Activated CD4-positive, alpha-beta memory T cell treated with anti-CD3 and anti-CD28 coated beads for 36 hours (primary cell): ENCODE measurements at regions of chr7 and their contacts with region 1.

Region 1: GRCh38 chr7:95511716-95512260 is 26.0 kb downstream of the ASB4 start:
- DNase-seq: peak; percentile 63
- H3K4me3 Mint-ChIP-seq: no peak overlapping the region
- H3K27ac Mint-ChIP-seq: no peak overlapping the region
- H3K4me1 Mint-ChIP-seq: no peaks in the 10 kb centered on the region
- H3K27me3 Mint-ChIP-seq: peaks cover 11% of the 10 kb centered on the region

Region 2: DNA sequence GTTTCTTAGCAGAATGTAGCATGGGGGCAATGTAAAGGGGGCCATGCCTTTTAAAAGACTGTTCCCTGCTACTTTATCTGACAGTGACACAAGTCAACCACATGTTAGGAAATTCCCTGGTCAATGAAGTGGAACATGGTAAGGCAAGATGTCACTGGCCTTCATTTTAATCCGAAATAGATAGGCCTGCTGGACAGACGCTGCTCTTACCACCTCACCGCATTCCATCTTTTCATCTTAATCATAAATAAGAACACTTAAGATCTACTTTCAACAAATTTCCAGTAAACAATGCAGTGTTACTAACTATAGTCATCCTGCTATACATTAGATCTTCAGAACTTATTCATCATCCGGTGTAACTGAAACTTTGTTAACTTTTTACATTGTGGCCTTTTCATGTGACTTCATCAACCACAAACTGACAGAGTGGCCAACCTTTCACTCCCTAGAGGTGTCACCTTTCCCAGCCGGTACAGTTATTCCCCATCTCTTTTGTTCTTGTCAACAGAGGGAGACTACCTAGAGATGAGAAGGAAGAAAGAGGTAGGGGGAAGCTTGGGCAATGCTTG is 10.4 kb before region 1 on chr7:
- CTCF ChIA-PET with region 1: interaction called, 10 read pairs
- POLR2A ChIA-PET with region 1: no interaction called
- intact Hi-C with region 1: no loop called
- DNase-seq: peak; percentile 38
- H3K4me3 Mint-ChIP-seq: no peak overlapping the region
- H3K27ac Mint-ChIP-seq: peak overlapping the region; percentile 36
- H3K4me1 Mint-ChIP-seq: peaks cover 24% of the 10 kb centered on the region
- H3K27me3 Mint-ChIP-seq: peaks cover 13% of the 10 kb centered on the region

Region 3: GRCh38 chr7:95690367-95690947 is 178.7 kb after region 1 on chr7:
- CTCF ChIA-PET with region 1: interaction called, 82 read pairs
- POLR2A ChIA-PET with region 1: no interaction called
- intact Hi-C with region 1: loop called (anchors 1 kb)
- DNase-seq: no peak
- H3K4me3 Mint-ChIP-seq: no peak overlapping the region
- H3K27ac Mint-ChIP-seq: no peak overlapping the region
- H3K4me1 Mint-ChIP-seq: no peaks in the 10 kb centered on the region
- H3K27me3 Mint-ChIP-seq: peaks cover 2% of the 10 kb centered on the region

Region 4: DNA sequence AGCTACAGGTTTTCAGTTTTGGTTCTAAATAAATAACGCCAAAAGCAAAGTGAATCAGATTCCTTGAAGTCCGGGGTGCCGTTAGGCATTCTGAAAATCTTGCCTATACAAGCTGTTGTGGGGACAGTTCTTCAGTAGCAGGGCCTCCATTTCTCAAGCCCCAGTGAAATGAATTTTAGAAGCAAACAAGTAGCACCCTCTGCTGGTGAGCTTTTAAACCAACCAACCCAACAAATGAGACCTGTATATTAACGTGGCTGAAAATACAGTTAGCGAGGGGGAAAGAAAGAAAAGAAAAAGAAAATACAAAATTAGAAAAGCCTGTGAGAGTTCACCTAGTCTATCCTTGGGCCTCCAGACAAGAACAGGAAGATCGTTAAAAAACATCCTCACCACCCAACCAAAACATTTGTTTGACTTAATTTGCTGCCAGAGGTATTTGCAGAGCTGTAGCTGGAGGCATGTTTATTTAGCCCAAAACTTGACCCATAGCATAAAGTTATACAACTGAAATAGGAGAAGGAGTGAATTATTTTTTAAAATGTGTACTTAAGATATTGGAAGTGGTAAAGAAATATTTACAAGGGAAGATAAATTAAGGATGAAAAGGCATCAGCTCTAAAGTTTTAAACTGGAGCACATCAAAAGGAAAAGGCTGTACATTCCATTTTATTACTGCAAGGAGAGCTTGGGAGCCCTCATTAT is 359.4 kb after region 1 on chr7:
- CTCF ChIA-PET with region 1: interaction called, 15 read pairs
- POLR2A ChIA-PET with region 1: no interaction called
- intact Hi-C with region 1: loop called (anchors 1 kb)
- DNase-seq: no peak
- H3K4me3 Mint-ChIP-seq: no peak overlapping the region
- H3K27ac Mint-ChIP-seq: no peak overlapping the region
- H3K4me1 Mint-ChIP-seq: no peaks in the 10 kb centered on the region
- H3K27me3 Mint-ChIP-seq: peaks cover 8% of the 10 kb centered on the region